ENCODE measurements at regions of chr9 and their contacts with region 1.

Region 1: DNA sequence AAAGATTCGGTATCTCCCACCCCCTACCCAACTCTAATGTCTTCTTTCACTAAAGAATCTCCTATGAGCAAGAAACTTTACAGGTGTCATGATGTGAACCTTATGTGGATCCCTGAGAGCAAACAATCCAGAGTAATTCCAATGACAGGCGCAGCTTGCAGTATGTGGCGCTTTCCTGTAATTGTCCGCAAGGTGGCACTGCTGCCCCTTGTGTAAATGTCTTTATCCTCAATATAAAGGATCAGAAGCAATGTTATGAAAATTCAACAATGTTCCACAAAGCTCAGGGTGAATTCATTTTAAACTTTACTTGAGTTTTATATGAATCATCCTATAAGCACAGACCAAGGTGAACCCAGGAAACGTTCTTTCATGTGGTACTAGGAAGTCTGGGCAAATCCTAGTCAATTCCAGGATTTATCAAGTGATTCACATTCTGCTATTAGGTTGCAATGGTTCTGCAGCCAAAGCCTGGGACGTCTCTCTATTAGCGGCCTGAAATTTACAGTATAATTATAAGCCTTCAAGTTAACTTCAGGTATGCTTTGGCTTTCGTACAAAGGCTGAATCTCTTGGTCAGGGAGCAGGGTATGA is 113.7 kb downstream of the TRPM6 start:
- DNase-seq: peak; percentile 76
- H3K4me3 ChIP-seq: no peak overlapping the region
- H3K27ac ChIP-seq: no peak overlapping the region
- H3K4me1 ChIP-seq: no peaks in the 10 kb centered on the region
- H3K27me3 ChIP-seq: peaks cover 3 to 4% of the 10 kb centered on the region in 2 experiments
- CTCF ChIP-seq: peak; percentile 71 to 92
- POLR2A ChIP-seq: no peak

Region 2: DNA sequence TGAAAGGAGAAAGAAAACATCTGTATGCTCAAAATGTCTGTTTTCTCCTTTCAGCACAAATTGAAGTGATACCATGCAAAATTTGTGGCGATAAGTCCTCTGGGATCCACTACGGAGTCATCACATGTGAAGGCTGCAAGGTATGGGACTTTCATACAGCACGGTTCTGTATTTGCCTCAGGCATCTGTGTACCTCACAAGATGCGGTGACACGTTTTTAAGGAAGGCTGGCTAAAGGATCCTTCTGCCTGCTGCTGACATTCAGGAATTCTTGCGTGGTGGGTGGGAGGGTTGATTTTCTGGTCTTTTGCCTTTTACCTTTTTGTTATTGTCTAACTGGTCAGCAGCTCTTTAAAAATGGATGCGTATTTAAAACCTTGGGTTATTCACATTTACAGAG is 143.8 kb before region 1 on chr9:
- CTCF ChIA-PET with region 1: no interaction called
- POLR2A ChIA-PET with region 1: no interaction called
- dilution Hi-C with region 1: no loop called
- intact Hi-C with region 1: no loop called
- DNase-seq: no peak
- H3K4me3 ChIP-seq: no peak overlapping the region
- H3K27ac ChIP-seq: no peak overlapping the region
- H3K4me1 ChIP-seq: no peaks in the 10 kb centered on the region
- H3K27me3 ChIP-seq: no peaks in the 10 kb centered on the region
- CTCF ChIP-seq: no peak
- POLR2A ChIP-seq: no peak

Region 3: GRCh38 chr9:74952281-74953151 is 178.5 kb after region 1 on chr9 and contains the start of gene C9orf40:
- CTCF ChIA-PET with region 1: interaction called, 36 read pairs
- POLR2A ChIA-PET with region 1: interaction called, 3 read pairs
- dilution Hi-C with region 1: no loop called
- intact Hi-C with region 1: loop called (anchors 1 kb)
- DNase-seq: peak; percentile 86
- H3K4me3 ChIP-seq: peak within 1 kb of the TSS; percentile 60 to 91 (median 61)
- H3K27ac ChIP-seq: peak within 1 kb of the TSS; percentile 54
- H3K4me1 ChIP-seq: peaks cover 4% of the 10 kb centered on the region
- H3K27me3 ChIP-seq: no peaks in the 10 kb centered on the region
- CTCF ChIP-seq: peak; percentile 86 to 93
- POLR2A ChIP-seq: no peak
- total RNA-seq, gene C9orf40: 5.1 and 7.5 TPM in 2 replicates

Region 4: DNA sequence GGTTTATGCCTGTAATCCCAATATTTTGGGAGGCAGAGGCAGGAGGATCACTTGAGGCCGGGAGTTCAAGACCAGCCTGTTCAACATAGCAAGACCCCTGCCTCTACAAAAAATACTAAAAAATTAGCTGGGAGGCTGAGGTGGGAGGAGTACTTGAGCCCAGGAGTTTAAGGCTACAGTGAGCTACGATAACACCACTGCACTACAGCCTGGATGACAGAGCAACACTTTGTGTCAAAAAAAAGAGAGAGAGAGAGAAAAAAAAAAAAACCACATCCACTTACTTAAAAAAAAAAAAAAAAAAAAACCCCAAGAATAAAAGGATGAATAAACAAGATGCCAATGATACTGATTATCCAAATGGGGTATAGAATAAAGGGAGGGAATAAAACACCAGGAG is 239.8 kb after region 1 on chr9:
- CTCF ChIA-PET with region 1: interaction called, 120 read pairs
- POLR2A ChIA-PET with region 1: no interaction called
- dilution Hi-C with region 1: no loop called
- intact Hi-C with region 1: no loop called
- DNase-seq: no peak
- H3K4me3 ChIP-seq: no peak overlapping the region
- H3K27ac ChIP-seq: no peak overlapping the region
- H3K4me1 ChIP-seq: no peaks in the 10 kb centered on the region
- H3K27me3 ChIP-seq: no peaks in the 10 kb centered on the region
- CTCF ChIP-seq: no peak
- POLR2A ChIP-seq: no peak

Region 5: GRCh38 chr9:75064307-75065025 is 290.5 kb after region 1 on chr9:
- CTCF ChIA-PET with region 1: interaction called, 10 read pairs
- POLR2A ChIA-PET with region 1: no interaction called
- dilution Hi-C with region 1: loop called (anchors 25 kb)
- intact Hi-C with region 1: no loop called
- DNase-seq: no peak
- H3K4me3 ChIP-seq: no peak overlapping the region
- H3K27ac ChIP-seq: no peak overlapping the region
- H3K4me1 ChIP-seq: no peaks in the 10 kb centered on the region
- H3K27me3 ChIP-seq: no peaks in the 10 kb centered on the region
- CTCF ChIP-seq: no peak
- POLR2A ChIP-seq: no peak

Region 6: DNA sequence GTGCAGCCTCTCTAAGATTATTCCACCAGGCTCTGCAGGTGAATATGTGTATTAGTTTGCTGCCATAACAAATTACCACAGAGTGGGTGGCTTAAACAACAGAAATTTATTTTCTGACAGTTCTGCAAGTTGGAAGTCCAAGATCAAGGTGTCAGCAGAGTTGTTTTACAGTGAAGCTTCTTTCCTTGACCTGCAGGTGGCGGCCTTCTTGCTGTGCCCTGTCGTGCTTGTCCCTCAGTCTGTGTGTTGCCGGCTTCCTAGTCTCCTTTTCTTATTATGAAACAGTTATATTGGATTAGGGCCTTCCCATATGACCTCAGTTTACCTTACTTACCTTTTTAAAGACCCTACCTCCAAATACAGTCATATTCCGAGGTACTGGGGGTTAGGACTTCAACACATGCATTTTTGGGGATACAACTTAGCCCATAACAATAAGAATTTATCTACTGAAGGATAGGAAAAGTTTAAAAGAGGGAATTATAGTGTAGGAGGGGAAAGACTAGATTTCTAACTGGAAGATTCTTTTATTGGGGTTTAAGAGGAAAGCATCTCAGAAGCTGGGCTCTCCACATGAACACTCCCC is 411.7 kb after region 1 on chr9:
- CTCF ChIA-PET with region 1: interaction called, 6 read pairs
- POLR2A ChIA-PET with region 1: no interaction called
- dilution Hi-C with region 1: no loop called
- intact Hi-C with region 1: loop called (anchors 5 kb)
- DNase-seq: peak; percentile 41
- H3K4me3 ChIP-seq: no peak overlapping the region
- H3K27ac ChIP-seq: no peak overlapping the region
- H3K4me1 ChIP-seq: peaks cover 5% of the 10 kb centered on the region
- H3K27me3 ChIP-seq: no peaks in the 10 kb centered on the region
- CTCF ChIP-seq: peak; percentile 60 to 66
- POLR2A ChIP-seq: no peak

Region 7: DNA sequence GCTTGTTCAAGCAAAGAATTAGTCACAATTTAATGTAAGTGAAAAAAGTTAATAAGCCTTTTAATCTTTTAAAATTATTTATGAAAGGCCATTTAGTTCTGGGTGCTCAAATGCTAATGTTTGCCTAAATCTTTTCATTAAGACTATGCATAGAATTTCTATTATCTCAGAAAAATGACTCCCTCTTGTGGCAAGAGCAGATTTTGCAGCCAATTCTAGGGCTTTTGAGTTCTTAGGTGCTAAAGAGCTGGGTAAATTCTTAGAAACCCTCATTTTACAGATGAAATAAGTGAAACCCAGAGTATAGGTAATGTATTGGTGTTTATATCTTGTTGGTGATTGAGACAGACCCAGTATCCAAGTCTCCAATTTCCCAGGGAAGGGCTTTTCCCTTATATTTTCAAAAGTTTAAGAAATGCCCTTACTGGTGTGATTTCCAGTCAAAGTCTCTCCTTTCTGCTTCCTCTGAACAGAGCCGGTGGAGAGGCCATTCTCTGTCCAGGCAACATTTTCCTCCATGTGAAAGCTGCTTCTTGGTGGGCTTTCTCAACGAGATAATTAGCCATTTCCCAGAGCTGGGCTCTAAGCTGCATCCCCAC is 1092.4 kb after region 1 on chr9:
- CTCF ChIA-PET with region 1: interaction called, 11 read pairs
- POLR2A ChIA-PET with region 1: no interaction called
- dilution Hi-C with region 1: no loop called
- intact Hi-C with region 1: loop called (anchors 10 kb)
- DNase-seq: peak; percentile 66
- H3K4me3 ChIP-seq: no peak overlapping the region
- H3K27ac ChIP-seq: no peak overlapping the region
- H3K4me1 ChIP-seq: no peaks in the 10 kb centered on the region
- H3K27me3 ChIP-seq: peaks cover 5 to 6% of the 10 kb centered on the region in 2 experiments
- CTCF ChIP-seq: peak; percentile 38 to 53
- POLR2A ChIP-seq: no peak